Activated CD4-positive, alpha-beta memory T cell treated with anti-CD3 and anti-CD28 coated beads for 36 hours (primary cell): ENCODE measurements at regions of chr12 and their contacts with region 1.

Region 1: GRCh38 chr12:94532490-94533422 is 73.1 kb upstream of the CEP83 start:
- DNase-seq: peak; percentile 81
- H3K4me3 Mint-ChIP-seq: no peak overlapping the region
- H3K27ac Mint-ChIP-seq: no peak overlapping the region
- H3K4me1 Mint-ChIP-seq: no peaks in the 10 kb centered on the region
- H3K27me3 Mint-ChIP-seq: peaks cover 5% of the 10 kb centered on the region

Region 2: DNA sequence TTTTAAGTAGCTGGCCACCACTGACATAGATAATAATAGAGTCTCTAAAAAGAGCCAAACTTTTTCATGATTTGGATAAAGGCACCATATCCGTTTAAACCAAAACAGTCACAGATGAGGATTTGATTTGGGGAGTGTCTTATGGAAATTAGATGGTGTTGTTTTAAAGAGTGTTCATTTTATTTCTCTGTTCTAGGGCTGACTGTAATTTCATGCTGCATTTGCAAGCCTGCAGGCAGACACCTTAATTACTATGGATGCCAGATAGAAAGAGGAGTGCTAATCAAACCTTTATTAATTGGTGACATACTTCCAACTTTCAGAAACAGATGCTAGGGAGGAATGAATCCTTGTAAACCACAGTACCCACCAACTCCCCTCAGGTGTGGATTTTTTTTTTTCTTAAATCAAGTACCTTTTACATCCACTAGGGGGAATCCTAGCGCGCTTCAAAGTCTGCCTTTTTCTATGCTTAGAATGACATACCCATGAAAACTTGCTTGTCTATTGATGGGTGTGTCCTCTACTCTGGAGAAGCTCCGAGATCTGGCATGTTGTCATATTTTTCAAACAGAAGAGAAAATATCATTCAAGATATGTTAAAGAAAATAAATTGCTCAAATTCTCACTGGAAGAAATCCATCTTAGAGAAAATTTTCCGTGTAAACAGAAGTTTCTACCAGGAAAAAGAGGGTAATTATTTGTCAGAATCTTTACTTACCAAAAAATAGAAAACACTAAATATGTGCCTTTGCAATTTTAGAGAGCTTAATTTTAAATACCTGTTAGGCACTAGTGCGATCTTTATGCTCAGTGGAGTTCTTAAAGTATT is 398.6 kb before region 1 on chr12:
- CTCF ChIA-PET with region 1: interaction called, 25 read pairs
- POLR2A ChIA-PET with region 1: no interaction called
- intact Hi-C with region 1: loop called (anchors 1 kb)
- DNase-seq: peak; percentile 31
- H3K4me3 Mint-ChIP-seq: no peak overlapping the region
- H3K27ac Mint-ChIP-seq: no peak overlapping the region
- H3K4me1 Mint-ChIP-seq: peaks cover 2% of the 10 kb centered on the region
- H3K27me3 Mint-ChIP-seq: no peaks in the 10 kb centered on the region

Region 3: GRCh38 chr12:94140556-94140955 is 392.2 kb before region 1 on chr12:
- CTCF ChIA-PET with region 1: interaction called, 25 read pairs
- POLR2A ChIA-PET with region 1: no interaction called
- intact Hi-C with region 1: loop called (anchors 1 kb)
- DNase-seq: peak; percentile 72
- H3K4me3 Mint-ChIP-seq: no peak overlapping the region
- H3K27ac Mint-ChIP-seq: no peak overlapping the region
- H3K4me1 Mint-ChIP-seq: peaks cover 3% of the 10 kb centered on the region
- H3K27me3 Mint-ChIP-seq: no peaks in the 10 kb centered on the region

Region 4: DNA sequence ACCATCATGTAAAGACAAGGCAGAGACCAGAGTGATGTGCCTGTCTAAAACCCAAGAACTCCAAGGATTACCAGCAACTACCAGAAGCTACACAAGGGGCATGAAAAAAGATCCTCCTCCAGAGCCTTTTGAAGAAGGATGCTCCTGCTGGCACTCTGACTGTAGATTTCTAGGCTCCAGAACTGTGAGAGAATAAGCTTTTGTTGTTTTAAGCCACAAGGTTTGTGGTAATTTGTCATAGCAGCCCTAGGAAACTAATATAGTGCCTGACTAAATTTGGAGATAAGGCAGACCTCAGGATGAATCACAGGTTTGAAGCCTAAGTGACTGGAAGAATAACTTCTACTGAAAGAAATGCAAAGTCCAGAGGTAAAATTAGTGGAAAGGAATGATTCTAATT is 206.0 kb before region 1 on chr12:
- CTCF ChIA-PET with region 1: no interaction called
- POLR2A ChIA-PET with region 1: no interaction called
- intact Hi-C with region 1: loop called (anchors 5 kb)
- DNase-seq: peak; percentile 20
- H3K4me3 Mint-ChIP-seq: no peak overlapping the region
- H3K27ac Mint-ChIP-seq: peak overlapping the region; percentile 8
- H3K4me1 Mint-ChIP-seq: peaks cover 24% of the 10 kb centered on the region
- H3K27me3 Mint-ChIP-seq: no peaks in the 10 kb centered on the region

Region 5: DNA sequence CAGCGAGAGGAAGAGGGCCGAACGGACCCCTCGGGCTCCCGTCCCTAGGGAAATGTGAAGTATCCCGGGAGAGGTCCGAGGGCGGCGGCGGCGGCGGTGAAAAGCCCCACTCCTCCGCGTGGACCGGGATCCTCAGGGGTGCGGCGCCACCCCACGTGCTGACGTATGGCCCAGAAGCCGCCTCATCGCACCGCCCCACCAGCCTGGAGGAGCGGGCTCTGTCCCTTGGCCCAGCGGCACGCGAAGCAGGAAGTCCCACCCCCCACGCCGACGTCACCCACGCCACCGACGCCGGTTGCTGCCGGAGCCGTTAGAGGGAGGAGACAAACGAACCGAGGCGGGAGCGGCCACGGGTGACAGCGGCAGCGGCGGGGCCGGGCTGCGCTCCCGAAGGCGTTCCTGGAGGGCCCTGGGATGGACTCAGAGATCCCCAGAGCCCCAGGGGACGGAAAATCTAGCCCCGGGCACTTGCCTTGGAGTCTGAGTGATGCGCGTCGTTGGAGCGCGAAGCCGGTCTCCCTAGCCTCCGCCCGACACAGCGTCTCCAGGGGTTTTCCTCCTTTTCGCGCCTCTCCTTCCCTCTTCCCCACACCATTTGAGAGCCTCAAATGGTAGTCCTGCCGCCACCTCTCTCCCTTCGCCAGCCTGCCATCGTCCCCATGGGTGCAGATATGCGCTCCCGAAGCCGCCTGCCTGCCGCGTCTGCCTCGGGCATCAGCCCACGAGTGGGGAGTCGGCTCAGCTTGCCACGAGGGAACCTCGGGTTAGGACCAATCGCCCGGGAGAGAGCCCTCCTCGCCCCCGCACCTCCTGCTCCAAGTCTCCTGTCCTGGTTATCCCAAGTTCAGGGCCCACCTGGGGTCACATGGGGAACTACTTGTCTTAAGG is 72.8 kb before region 1 on chr12 and contains the start of gene CEP83:
- CTCF ChIA-PET with region 1: no interaction called
- POLR2A ChIA-PET with region 1: no interaction called
- intact Hi-C with region 1: loop called (anchors 5 kb)
- DNase-seq: peak; percentile 98
- H3K4me3 Mint-ChIP-seq: peak within 1 kb of the TSS; percentile 82
- H3K27ac Mint-ChIP-seq: peak within 1 kb of the TSS; percentile 92
- H3K4me1 Mint-ChIP-seq: peaks cover 31% of the 10 kb centered on the region
- H3K27me3 Mint-ChIP-seq: peaks cover 7% of the 10 kb centered on the region
- total RNA-seq, gene CEP83: 23.4 TPM

Region 6: GRCh38 chr12:94545935-94546771 is 13.4 kb after region 1 on chr12:
- CTCF ChIA-PET with region 1: no interaction called
- POLR2A ChIA-PET with region 1: no interaction called
- intact Hi-C with region 1: no loop called
- DNase-seq: no peak
- H3K4me3 Mint-ChIP-seq: no peak overlapping the region
- H3K27ac Mint-ChIP-seq: no peak overlapping the region
- H3K4me1 Mint-ChIP-seq: no peaks in the 10 kb centered on the region
- H3K27me3 Mint-ChIP-seq: no peaks in the 10 kb centered on the region